ENCODE measurements at regions of chr10 and their contacts with region 1.

Region 1: DNA sequence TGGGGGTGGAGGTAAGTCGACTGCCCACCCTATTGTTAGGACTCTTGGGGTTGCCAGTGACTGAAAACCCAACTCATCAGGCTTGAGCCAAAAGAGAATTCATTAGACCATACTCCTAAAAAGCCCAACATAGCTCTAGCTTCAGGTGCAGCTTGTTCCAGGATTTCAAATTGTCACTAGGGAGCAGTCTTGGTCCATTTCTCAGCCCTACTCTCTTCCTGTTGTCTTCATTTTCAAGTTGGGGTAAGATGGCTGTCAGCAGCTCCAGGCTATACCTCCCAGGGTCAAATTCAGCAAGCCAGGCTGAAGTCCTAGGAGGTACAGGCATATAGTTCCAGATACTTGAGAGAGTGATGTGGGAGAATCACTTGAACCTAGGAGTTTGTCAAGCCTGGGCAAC is 14.9 kb upstream of the COL13A1 start:
- DNase-seq: no peak
- H3K4me3 ChIP-seq: no peak overlapping the region
- H3K27ac ChIP-seq: no peak overlapping the region
- H3K4me1 ChIP-seq: no peaks in the 10 kb centered on the region
- H3K27me3 ChIP-seq: peaks cover 27% of the 10 kb centered on the region; the same call in 1 of the 2 replicates
- CTCF ChIP-seq: peak; percentile 58
- EP300 ChIP-seq: no peak
- RAD21 ChIP-seq: peak; percentile 63

Region 2: GRCh38 chr10:69757553-69758309 is 29.1 kb before region 1 on chr10:
- CTCF ChIA-PET with region 1: interaction called, 15 read pairs
- POLR2A ChIA-PET with region 1: no interaction called
- DNase-seq: peak; percentile 82
- H3K4me3 ChIP-seq: peak overlapping the region in 1 of 2 experiments; percentile 7; a peak in 1 of 4 replicates
- H3K27ac ChIP-seq: peak overlapping the region; percentile 71 to 99
- H3K4me1 ChIP-seq: peaks cover 14 to 46% of the 10 kb centered on the region in 2 experiments
- H3K27me3 ChIP-seq: no peaks in the 10 kb centered on the region
- CTCF ChIP-seq: no peak
- EP300 ChIP-seq: no peak; a peak in 1 of 4 replicates
- RAD21 ChIP-seq: peak; percentile 22; the same call in 1 of the 2 replicates

Region 3: GRCh38 chr10:69769395-69769992 is 17.3 kb before region 1 on chr10:
- CTCF ChIA-PET with region 1: interaction called, 13 read pairs
- POLR2A ChIA-PET with region 1: no interaction called
- DNase-seq: no peak
- H3K4me3 ChIP-seq: no peak overlapping the region
- H3K27ac ChIP-seq: peak overlapping the region in 1 of 2 experiments; percentile 43; a peak in 2 of 4 replicates
- H3K4me1 ChIP-seq: peaks cover 11 to 12% of the 10 kb centered on the region in 2 experiments; a peak in 2 of 4 replicates
- H3K27me3 ChIP-seq: no peaks in the 10 kb centered on the region
- CTCF ChIP-seq: no peak; the same call in 1 of the 2 replicates
- EP300 ChIP-seq: 0 out of 4 replicates have a peak, but pooled peaks of 1 of the 2 experiments have one; percentile 10
- RAD21 ChIP-seq: no peak

Region 4: DNA sequence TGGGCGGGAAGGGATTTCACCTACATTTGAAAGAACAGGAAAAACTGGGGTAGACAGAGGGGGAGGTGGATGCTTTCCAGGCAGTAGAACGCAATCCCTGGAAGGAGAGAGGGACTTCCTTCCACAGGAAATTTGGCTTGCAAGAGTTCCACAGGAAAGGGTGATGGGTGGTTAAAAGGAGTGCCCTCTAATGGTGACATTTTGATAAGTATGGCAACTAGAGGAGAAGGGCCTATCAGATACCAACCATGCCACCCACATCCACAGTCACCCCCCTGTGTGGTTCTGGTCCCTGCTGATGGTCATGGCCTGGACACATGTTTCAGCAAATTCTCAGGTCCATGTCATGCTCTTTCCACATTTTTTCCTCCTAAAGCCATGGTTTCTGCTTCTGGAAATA is 12.2 kb before region 1 on chr10:
- CTCF ChIA-PET with region 1: interaction called, 13 read pairs
- POLR2A ChIA-PET with region 1: no interaction called
- DNase-seq: no peak
- H3K4me3 ChIP-seq: no peak overlapping the region
- H3K27ac ChIP-seq: no peak overlapping the region
- H3K4me1 ChIP-seq: peaks cover 0 to 3% of the 10 kb centered on the region in 2 experiments; a peak in 1 of 4 replicates
- H3K27me3 ChIP-seq: no peaks in the 10 kb centered on the region
- CTCF ChIP-seq: 0 out of 2 replicates have a peak, but pooled peaks have one; percentile 11
- EP300 ChIP-seq: no peak
- RAD21 ChIP-seq: no peak